ENCODE measurements at regions of chr5 and their contacts with region 1.

Region 1: GRCh38 chr5:157743163-157744050 is at the start of gene LSM11:
- DNase-seq: peak; percentile 66
- ATAC-seq: peak; percentile 93
- H3K4me3 ChIP-seq: peak within 1 kb of the TSS; percentile 72 to 82
- H3K27ac ChIP-seq: peak within 1 kb of the TSS; percentile 53; the same call in 1 of the 2 replicates
- H3K4me1 ChIP-seq: peaks cover 8 to 24% of the 10 kb centered on the region in 2 experiments; a peak in 2 of 4 replicates
- H3K27me3 ChIP-seq: no peaks in the 10 kb centered on the region
- CTCF ChIP-seq: peak; percentile 95 to 100 (median 99)
- POLR2A ChIP-seq: no peak
- RAD21 ChIP-seq: peak; percentile 97
- total RNA-seq, gene LSM11: 6.2 TPM

Region 2: DNA sequence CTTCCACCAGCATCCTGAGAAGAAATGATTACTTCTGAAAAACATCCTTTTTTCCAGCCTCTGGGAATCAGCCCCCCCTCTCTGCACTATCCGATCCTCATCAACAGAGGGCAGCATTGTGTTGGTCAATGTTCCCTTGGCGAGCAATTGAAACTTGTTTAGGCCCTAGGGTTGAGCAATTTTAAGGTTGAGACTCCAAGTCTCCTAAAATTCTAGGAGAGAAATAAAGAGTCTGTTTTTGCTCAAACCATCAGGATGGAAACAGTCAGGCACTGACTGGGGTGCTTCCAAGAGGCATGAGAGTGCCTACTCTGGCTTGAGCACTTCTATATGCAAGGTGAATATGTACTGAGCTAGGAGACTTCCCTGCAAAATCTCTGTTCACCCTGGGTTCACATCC is 489.9 kb before region 1 on chr5:
- CTCF ChIA-PET with region 1: no interaction called
- POLR2A ChIA-PET with region 1: no interaction called
- RAD21 ChIA-PET with region 1: no interaction called
- intact Hi-C with region 1: loop called (anchors 10 kb)
- DNase-seq: peak; percentile 28
- ATAC-seq: peak; percentile 97
- H3K4me3 ChIP-seq: no peak overlapping the region
- H3K27ac ChIP-seq: no peak overlapping the region
- H3K4me1 ChIP-seq: no peaks in the 10 kb centered on the region
- H3K27me3 ChIP-seq: no peaks in the 10 kb centered on the region
- CTCF ChIP-seq: peak; percentile 84 to 91 (median 88)
- POLR2A ChIP-seq: no peak
- RAD21 ChIP-seq: peak; percentile 89

Region 3: DNA sequence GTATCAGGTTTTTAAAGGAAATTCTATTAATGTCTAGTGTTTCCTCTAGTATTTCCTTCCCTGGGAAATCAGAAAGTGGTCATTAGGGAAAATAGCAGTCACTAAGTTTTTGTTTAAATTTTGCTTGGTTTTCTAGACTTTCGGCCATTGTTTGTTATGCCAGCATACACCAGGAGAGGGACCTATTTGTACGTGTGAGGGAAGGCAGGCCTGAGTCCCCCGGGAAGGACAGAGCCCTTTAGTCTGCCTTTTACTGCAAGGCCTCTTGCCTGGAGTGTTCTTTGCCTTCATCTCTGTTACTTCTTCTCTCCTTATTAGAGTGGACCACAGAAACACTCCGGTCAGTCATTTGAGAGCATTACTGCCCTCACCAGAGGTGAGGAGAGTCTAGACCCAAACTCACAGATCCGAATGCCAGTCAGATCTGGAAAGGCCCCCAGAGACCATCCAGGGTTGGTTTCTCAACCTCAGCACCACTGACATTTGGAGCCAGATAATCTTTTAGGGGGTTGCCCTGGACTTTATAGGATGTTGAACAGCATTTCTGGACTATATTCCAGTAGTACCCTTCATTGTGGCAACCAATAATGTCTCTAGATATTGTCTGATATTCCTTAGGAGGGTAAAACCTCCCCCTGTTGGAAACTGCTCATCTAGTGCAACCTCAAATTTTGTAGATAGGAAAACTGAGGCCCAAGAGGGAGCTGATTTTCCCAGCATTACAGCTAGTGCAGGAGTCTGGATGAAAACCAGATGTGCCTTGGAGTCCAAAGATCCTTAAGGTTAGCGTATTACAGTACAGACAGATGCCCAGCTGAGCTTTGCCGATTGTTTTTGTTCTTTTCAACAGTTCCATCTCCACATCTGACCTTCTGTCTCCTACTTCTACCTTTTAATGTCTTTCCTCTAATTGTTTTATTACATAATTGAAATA is 376.4 kb before region 1 on chr5:
- CTCF ChIA-PET with region 1: no interaction called
- POLR2A ChIA-PET with region 1: no interaction called
- RAD21 ChIA-PET with region 1: no interaction called
- intact Hi-C with region 1: loop called (anchors 1 kb)
- DNase-seq: no peak
- ATAC-seq: peak; percentile 85
- H3K4me3 ChIP-seq: no peak overlapping the region
- H3K27ac ChIP-seq: no peak overlapping the region
- H3K4me1 ChIP-seq: no peaks in the 10 kb centered on the region
- H3K27me3 ChIP-seq: no peaks in the 10 kb centered on the region
- CTCF ChIP-seq: peak; percentile 62 to 82 (median 71)
- POLR2A ChIP-seq: no peak
- RAD21 ChIP-seq: peak; percentile 93

Region 4: DNA sequence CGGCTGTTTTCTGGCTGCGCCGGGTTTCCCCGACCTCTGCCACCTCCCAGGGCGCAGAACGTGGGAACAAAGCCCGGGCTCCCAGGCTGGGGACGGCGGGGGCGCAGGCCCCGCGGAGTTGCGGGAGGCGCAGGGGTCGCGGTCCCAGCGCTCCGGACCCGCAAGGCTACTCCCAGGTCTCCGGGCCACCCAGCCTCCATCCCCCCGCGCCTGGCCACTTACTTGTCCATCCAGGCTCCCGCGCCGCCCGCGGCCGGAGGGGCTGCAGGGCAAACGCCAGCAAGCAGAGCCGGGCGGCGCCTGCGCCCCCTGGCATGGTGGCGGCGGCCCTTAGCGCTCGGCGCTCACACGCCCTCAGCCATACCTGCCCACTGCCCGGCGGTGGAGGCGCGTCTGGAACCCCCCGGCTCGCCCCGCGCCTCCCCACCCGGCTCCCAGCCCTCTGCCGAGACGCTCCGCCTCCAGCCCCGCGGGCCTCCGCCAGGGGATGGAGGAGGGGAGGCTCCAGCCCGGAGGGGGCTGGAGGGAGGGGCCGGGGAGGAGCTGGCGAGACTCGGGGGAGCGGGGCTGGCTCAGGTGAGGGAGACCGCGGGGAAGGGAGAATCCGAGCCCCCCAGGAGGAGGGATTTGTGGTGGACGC is 167.9 kb before region 1 on chr5 and contains the start of gene ADAM19:
- CTCF ChIA-PET with region 1: no interaction called
- POLR2A ChIA-PET with region 1: no interaction called
- RAD21 ChIA-PET with region 1: no interaction called
- intact Hi-C with region 1: loop called (anchors 5 kb)
- DNase-seq: no peak
- ATAC-seq: peak; percentile 89
- H3K4me3 ChIP-seq: peak within 1 kb of the TSS; percentile 82 to 96
- H3K27ac ChIP-seq: peak within 1 kb of the TSS; percentile 75; the same call in 1 of the 2 replicates
- H3K4me1 ChIP-seq: peaks cover 17 to 72% of the 10 kb centered on the region in 2 experiments
- H3K27me3 ChIP-seq: no peaks in the 10 kb centered on the region
- CTCF ChIP-seq: no peak
- POLR2A ChIP-seq: no peak
- RAD21 ChIP-seq: no peak
- total RNA-seq, gene ADAM19: 77.3 TPM

Region 5: DNA sequence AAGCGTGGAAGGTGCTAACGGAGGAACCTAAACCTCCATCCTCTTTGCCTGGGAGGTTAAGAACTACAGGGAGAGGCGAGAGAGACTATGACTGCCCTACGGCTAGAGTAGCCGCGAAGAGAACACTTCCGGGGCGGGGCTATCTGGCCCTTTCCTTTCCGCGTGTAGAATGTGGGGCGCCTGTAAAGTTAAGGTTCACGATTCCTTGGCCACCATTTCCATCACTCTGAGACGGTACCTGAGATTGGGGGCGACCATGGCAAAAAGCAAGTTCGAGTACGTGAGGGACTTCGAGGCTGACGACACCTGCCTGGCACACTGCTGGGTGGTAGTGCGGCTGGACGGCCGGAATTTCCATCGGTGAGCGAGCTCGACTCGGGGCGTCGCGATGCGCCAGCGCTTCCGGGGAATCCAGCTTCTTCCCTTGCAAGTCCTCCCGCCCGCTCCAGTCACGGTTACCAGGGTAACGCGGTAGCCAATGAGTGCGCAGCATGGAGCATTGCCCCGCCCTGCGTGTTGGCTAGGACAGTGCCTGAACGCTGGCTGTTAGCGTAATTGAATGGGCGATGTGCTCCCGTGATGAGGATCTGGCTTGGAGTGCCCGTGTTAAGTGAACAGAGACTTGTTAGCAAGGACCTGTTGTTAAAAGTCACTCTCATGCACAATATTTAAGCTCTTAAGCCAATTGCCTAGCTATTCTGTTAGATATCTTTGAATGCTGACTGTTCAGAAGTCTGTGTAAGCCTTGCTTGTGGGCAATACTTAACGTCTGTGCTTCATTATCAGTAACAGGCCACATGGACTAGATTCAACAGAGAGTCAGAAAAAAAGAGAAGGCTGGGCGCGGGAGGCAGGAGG is 11.9 kb before region 1 on chr5 and contains the start of gene THG1L:
- CTCF ChIA-PET with region 1: interaction called, 17 read pairs
- POLR2A ChIA-PET with region 1: interaction called, 3 read pairs
- RAD21 ChIA-PET with region 1: no interaction called
- intact Hi-C with region 1: no loop called
- DNase-seq: peak; percentile 95
- ATAC-seq: peak; percentile 97
- H3K4me3 ChIP-seq: peak within 1 kb of the TSS; percentile 77 to 78
- H3K27ac ChIP-seq: peak within 1 kb of the TSS; percentile 79
- H3K4me1 ChIP-seq: peaks cover 0 to 18% of the 10 kb centered on the region in 2 experiments; a peak in 3 of 4 replicates
- H3K27me3 ChIP-seq: no peaks in the 10 kb centered on the region
- CTCF ChIP-seq: no peak
- POLR2A ChIP-seq: peak; percentile 94
- RAD21 ChIP-seq: no peak
- total RNA-seq, gene THG1L: 33.9 TPM